ENCODE measurements at regions of chr11 and their contacts with region 1.

Region 1: GRCh38 chr11:133291780-133292179 is 240.5 kb downstream of the OPCML start:
- DNase-seq: peak; percentile 83
- H3K4me3 ChIP-seq: no peak overlapping the region
- H3K27ac ChIP-seq: peak overlapping the region in 3 of 4 donors; percentile 17 to 67 (median 48)
- H3K4me1 ChIP-seq: peaks cover 0 to 30% (median 27%) of the 10 kb centered on the region in 4 donors
- H3K27me3 ChIP-seq: peaks cover 0 to 28% (median 3%) of the 10 kb centered on the region in 3 donors
- CTCF ChIP-seq: no peak
- EP300 ChIP-seq: peak in 2 of 4 donors; percentile 27 to 60
- POLR2A ChIP-seq: no peak

Region 2: GRCh38 chr11:133382131-133382812 is 90.5 kb after region 1 on chr11:
- intact Hi-C with region 1: loop called (anchors 2 kb)
- DNase-seq: no peak
- H3K4me3 ChIP-seq: no peak overlapping the region
- H3K27ac ChIP-seq: no peak overlapping the region
- H3K4me1 ChIP-seq: peaks cover 0 to 20% (median 12%) of the 10 kb centered on the region in 4 donors
- H3K27me3 ChIP-seq: peaks cover 0 to 4% (median 0%) of the 10 kb centered on the region in 3 donors
- CTCF ChIP-seq: no peak
- EP300 ChIP-seq: no peak
- POLR2A ChIP-seq: no peak

Measured in sigmoid colon (tissue), 7 donors.